Dorsolateral prefrontal cortex (tissue), 120 donors: ENCODE measurements at regions of chr2 and their contacts with region 1.

Region 1: DNA sequence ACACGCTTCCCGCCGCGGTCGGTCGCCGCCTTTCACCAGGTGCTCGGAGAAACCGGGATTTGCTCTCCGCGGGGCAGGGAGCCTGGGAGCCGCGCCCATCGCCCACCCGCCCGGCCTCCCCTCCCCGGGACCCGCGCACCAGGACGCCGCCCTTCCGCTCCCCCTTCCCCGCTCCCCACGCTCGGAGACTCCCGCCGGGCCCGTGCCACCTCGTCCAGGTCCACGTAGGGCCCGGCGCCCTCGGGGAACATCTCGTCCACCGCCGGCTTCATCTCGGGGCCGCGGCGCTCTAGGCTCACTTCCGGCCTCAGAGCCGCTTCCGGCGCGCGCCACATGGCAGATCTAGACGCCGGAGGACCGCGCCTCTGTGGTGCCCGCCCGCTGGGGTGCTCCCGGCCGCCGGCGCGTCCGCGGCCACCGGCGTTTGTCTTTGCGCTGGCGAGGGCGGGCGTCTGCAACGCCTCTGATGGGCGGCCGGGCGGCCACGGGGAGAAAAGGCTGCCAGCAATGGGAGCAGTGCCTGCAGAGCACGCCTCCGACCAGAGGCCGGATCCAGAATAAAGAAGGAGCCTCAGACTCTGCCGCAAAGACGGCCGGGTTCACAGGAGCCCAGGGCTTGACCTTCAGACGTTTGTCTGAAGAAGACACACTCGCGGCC is at the start of gene COPS9:
- DNase-seq: peak; percentile 82 to 92 (median 88)
- H3K4me3 ChIP-seq: peak within 1 kb of the TSS; percentile 71 to 100 (median 97)
- H3K27ac ChIP-seq: peak within 1 kb of the TSS in 57 of 59 donors; percentile 19 to 93 (median 78)
- H3K27me3 ChIP-seq: no peaks in the 10 kb centered on the region
- CTCF ChIP-seq: peak in 46 of 56 donors; percentile 11 to 68 (median 42)
- total RNA-seq, gene COPS9: 143 to 327 (median 229) TPM

Region 2: GRCh38 chr2:240021488-240022104 is 114.5 kb before region 1 on chr2:
- intact Hi-C with region 1: loop called (anchors 10 kb)
- DNase-seq: peak in 9 of 10 donors; percentile 48 to 77 (median 70)
- H3K4me3 ChIP-seq: no peak overlapping the region
- H3K27ac ChIP-seq: no peak overlapping the region
- H3K27me3 ChIP-seq: no peaks in the 10 kb centered on the region
- CTCF ChIP-seq: peak; percentile 41 to 77 (median 68)